Activated CD4-positive, alpha-beta memory T cell treated with anti-CD3 and anti-CD28 coated beads, Interleukin-2, amount 10 ng/mL, durations not matched to agents 7 days and 5 days (primary cell): ENCODE measurements at regions of chr15 and their contacts with region 1.

Region 1: GRCh38 chr15:59917504-59918157 is 86.5 kb upstream of the FOXB1 start:
- DNase-seq: peak; percentile 84
- H3K4me3 Mint-ChIP-seq: no peak overlapping the region
- H3K27ac Mint-ChIP-seq: no peak overlapping the region
- H3K4me1 Mint-ChIP-seq: peaks cover 31% of the 10 kb centered on the region
- H3K27me3 Mint-ChIP-seq: peaks cover 26% of the 10 kb centered on the region

Region 2: DNA sequence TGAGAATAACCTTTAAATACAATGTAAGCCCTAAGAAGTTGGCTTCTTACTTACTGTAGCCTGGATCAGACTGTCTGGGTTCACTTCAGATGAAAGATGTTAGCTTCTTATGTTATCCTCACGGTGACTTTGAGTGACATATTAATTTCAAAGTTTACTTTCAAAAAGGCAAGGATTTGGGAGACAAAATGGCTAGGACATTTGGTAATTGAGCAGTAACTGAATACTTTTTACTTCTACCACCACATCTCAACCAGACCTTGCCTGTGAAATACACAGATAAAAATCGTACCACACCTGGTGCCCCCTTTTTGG is 192.5 kb before region 1 on chr15:
- CTCF ChIA-PET with region 1: interaction called, 11 read pairs
- POLR2A ChIA-PET with region 1: no interaction called
- DNase-seq: no peak
- H3K4me3 Mint-ChIP-seq: no peak overlapping the region
- H3K27ac Mint-ChIP-seq: no peak overlapping the region
- H3K4me1 Mint-ChIP-seq: no peaks in the 10 kb centered on the region
- H3K27me3 Mint-ChIP-seq: peaks cover 23% of the 10 kb centered on the region

Region 3: GRCh38 chr15:59933607-59934006 is 16.0 kb after region 1 on chr15:
- CTCF ChIA-PET with region 1: interaction called, 13 read pairs
- POLR2A ChIA-PET with region 1: no interaction called
- DNase-seq: no peak
- H3K4me3 Mint-ChIP-seq: no peak overlapping the region
- H3K27ac Mint-ChIP-seq: no peak overlapping the region
- H3K4me1 Mint-ChIP-seq: peaks cover 4% of the 10 kb centered on the region
- H3K27me3 Mint-ChIP-seq: peaks cover 34% of the 10 kb centered on the region

Region 4: DNA sequence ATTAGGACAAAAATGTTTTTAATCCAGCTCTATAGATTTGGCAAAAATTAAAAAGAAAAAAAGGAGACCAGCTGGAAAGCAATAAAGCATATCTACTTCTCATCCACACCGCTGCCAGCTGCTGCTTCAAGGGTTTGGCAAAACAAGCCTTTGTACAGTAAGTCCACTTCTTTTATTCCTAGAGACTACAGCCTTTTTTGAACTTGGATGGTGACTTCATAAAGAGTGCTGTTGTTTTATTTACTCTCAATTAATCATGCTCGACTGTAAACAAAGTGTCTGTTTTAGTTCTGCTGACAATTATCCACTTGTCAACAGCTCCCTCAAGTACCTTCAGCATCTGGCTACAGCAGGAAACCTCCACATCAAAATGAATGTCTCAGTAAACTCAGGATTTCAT is 74.2 kb after region 1 on chr15:
- CTCF ChIA-PET with region 1: interaction called, 43 read pairs
- POLR2A ChIA-PET with region 1: interaction called, 5 read pairs
- DNase-seq: no peak
- H3K4me3 Mint-ChIP-seq: no peak overlapping the region
- H3K27ac Mint-ChIP-seq: no peak overlapping the region
- H3K4me1 Mint-ChIP-seq: peaks cover 28% of the 10 kb centered on the region
- H3K27me3 Mint-ChIP-seq: peaks cover 84% of the 10 kb centered on the region

Region 5: DNA sequence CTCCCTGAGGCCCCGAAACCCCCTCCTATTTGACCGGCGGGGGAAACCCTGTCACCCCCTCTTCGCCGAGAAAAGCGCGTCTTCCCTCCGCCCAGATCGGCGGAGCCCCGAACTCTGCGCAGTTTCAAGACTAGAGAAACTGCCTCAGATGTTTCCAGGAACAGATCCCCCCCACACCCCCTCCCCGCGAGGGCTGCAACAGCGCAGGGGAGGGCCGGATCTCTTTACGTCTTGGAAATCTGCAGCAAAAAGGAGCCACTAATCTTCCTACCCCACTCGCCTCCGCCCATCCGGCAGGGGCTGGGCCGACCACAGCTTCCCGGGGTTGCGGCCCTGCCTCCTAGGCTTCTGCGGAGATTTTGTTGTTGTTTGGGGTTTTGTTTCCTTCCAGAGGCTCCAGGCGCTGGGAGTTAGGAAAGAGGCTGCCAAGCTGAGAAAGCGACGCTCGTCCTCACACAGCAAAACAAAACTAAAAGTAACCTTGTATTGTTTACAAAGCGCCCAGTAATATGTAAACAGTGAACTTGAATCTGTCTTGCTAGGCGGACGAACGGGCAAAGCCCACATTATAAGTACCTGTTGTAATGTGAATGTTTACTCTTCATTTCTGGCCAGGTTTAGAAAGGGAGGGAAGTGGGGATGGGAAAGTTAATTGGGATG is 88.7 kb after region 1 on chr15:
- CTCF ChIA-PET with region 1: interaction called, 42 read pairs
- POLR2A ChIA-PET with region 1: interaction called, 20 read pairs
- DNase-seq: peak; percentile 91
- H3K4me3 Mint-ChIP-seq: peak overlapping the region; percentile 96
- H3K27ac Mint-ChIP-seq: peak overlapping the region; percentile 96
- H3K4me1 Mint-ChIP-seq: peaks cover 71% of the 10 kb centered on the region
- H3K27me3 Mint-ChIP-seq: peaks cover 76% of the 10 kb centered on the region

Region 6: GRCh38 chr15:60128000-60128376 is 210.4 kb after region 1 on chr15:
- CTCF ChIA-PET with region 1: interaction called, 10 read pairs
- POLR2A ChIA-PET with region 1: interaction called, 6 read pairs
- DNase-seq: no peak
- H3K4me3 Mint-ChIP-seq: peak overlapping the region; percentile 73
- H3K27ac Mint-ChIP-seq: peak overlapping the region; percentile 82
- H3K4me1 Mint-ChIP-seq: peaks cover 56% of the 10 kb centered on the region
- H3K27me3 Mint-ChIP-seq: peaks cover 3% of the 10 kb centered on the region

Region 7: GRCh38 chr15:60223176-60223575 is 305.5 kb after region 1 on chr15:
- CTCF ChIA-PET with region 1: no interaction called
- POLR2A ChIA-PET with region 1: no interaction called
- DNase-seq: no peak
- H3K4me3 Mint-ChIP-seq: no peak overlapping the region
- H3K27ac Mint-ChIP-seq: no peak overlapping the region
- H3K4me1 Mint-ChIP-seq: no peaks in the 10 kb centered on the region
- H3K27me3 Mint-ChIP-seq: peaks cover 28% of the 10 kb centered on the region

Region 8: GRCh38 chr15:60326824-60327654 is 409.4 kb after region 1 on chr15:
- CTCF ChIA-PET with region 1: interaction called, 75 read pairs
- POLR2A ChIA-PET with region 1: interaction called, 6 read pairs
- DNase-seq: peak; percentile 39
- H3K4me3 Mint-ChIP-seq: no peak overlapping the region
- H3K27ac Mint-ChIP-seq: no peak overlapping the region
- H3K4me1 Mint-ChIP-seq: peaks cover 15% of the 10 kb centered on the region
- H3K27me3 Mint-ChIP-seq: peaks cover 60% of the 10 kb centered on the region